ENCODE measurements at regions of chr11 and their contacts with region 1.

Region 1: DNA sequence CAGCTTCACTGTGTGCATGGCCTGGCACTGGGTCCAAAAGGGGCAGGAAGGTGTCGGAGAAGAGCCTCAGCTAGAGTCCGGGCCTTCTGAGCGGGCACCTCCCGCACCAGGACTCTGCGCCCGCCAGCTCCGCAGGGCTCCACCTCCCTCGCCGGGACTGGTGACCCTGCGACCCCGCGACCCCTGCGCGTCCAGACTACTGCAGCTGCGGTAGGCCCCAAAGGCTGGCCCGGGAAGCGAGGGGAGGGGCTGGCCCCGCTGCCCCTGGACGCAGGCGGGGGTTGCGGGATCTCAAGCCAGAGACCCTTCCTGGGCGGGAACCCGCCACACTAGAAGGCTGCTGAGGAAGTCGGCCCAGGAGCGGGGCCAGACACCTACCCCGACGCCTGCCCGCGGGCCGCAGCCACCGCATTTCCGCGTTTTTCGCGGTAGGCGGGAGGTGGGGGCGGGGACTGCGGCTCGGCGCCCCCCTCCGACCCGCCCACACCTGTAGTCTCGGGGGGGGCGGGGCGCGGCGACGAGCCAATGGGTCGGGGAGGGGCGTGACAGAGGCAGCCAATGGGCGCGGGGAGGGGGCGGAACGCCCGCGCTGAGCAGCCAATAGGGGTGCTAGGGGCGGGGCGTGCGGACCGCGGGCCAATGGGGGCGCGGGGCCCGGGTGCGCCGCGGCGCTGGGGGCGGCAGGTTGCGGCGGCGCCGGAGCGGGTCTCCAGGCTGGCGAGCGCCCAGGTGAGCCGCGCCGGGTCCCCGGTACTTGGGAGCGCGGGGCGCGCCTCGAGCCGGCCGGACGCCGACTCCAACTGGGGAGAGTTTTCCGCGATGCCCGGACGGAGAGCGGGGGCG is at the starts of genes LMNTD2 and RASSF7:
- DNase-seq: peak; percentile 76
- ATAC-seq: peak; percentile 84
- H3K4me3 ChIP-seq: peak within 1 kb of the TSS; percentile 66 to 92
- H3K27ac ChIP-seq: peak within 1 kb of the TSS; percentile 97
- H3K4me1 ChIP-seq: peaks cover 23 to 40% of the 10 kb centered on the region in 2 experiments
- H3K27me3 ChIP-seq: no peaks in the 10 kb centered on the region
- CTCF ChIP-seq: no peak
- POLR2A ChIP-seq: no peak
- RAD21 ChIP-seq: no peak
- total RNA-seq, gene LMNTD2: 9.5 TPM
- total RNA-seq, gene RASSF7: 35.9 TPM

Region 2: DNA sequence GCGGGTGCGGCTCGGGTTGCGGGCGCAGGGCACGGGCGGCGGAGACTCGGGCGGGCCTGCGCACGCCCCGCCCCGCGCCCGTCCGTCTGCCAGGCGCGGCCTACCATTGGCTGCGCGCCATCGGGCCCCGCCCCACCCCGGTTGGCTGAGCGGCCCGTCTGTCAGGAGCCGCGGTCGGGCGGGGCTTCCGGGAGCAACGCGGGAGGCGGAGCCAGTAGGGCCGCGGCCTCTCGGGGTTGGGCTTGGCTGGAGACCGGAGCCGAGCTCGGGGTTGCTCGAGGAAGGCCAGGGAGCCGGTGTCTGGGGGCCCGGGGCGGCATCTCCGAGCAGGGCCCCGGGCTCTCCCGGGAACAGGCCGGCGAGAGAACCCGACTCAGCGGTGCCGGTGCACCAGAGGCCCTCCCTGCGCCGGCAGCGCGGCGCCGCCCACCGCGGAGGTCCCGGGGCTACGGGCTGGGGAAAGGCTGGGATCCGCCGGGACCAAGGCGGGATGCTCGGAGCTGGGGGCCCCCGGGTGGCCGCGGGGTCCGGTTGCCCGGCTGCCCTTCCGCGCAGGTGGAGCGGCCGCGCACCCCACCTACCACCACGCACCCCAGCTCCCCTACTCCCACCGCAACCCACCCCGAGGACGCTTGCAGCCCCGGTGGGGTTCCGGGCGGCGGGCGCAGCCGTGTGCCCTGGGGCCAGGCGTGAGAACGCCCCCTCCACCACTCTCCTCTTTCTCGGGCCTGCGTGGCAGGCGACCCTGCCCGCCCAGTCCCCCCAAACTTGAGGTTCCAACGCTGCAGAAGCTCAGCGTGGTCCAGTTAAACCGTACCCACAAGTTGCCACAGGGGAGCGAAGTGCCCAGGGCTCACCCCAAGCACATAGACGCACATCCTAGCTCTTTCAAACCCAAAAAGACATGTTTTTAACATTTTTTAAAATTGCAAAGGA is 24.7 kb before region 1 on chr11 and contains the start of gene HRAS:
- CTCF ChIA-PET with region 1: no interaction called
- POLR2A ChIA-PET with region 1: no interaction called
- RAD21 ChIA-PET with region 1: no interaction called
- intact Hi-C with region 1: loop called (anchors 2 kb)
- DNase-seq: peak; percentile 86
- ATAC-seq: peak; percentile 83
- H3K4me3 ChIP-seq: peak within 1 kb of the TSS; percentile 76 to 90
- H3K27ac ChIP-seq: peak within 1 kb of the TSS; percentile 100
- H3K4me1 ChIP-seq: peaks cover 15 to 33% of the 10 kb centered on the region in 2 experiments; a peak in 3 of 4 replicates
- H3K27me3 ChIP-seq: no peaks in the 10 kb centered on the region
- CTCF ChIP-seq: no peak
- POLR2A ChIP-seq: peak; percentile 59
- RAD21 ChIP-seq: no peak
- total RNA-seq, gene HRAS: 104 TPM

Region 3: DNA sequence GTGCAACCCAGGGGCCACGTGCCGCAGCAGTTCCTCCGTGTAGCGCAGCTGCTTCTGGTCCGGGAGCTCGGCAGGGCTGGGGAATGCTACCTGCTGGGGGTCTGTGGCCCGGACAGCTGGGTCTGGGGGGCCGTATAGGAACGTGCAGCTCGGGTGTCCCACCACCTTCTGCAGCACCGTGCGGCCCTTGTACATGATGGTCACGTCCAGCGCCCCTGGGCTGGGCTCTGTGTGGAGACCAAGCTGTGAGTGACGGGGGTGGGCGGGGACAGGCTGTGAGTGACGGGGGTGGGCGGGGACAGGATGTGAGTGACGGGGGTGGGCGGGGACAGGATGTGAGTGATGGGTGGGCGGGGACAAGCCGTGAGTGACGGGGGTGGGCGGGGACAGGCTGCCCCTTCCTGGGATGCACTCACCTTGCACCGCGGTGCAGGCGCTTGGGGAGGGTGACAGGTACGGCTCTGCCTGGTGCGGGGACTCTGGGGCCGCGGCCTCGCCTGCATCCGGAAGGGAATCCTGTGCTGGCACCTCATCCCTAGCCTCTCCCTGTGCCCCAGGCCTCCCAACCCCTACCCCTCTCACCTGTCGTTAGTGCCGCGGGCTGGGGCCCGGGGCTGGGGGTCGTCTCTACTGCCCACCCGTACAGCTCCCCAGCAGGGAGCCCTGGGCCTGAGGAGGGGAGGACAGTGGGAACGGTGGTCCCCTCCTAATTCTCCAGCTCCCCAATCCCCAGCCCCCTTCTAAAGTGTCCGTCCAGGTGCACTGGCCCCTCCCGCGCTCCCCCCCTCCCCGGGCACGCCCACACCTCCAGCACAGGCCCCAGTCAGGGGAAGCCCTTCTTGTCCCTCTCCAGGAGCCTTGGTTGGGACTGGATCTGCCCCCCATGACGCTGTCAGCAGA is 53.1 kb after region 1 on chr11:
- CTCF ChIA-PET with region 1: interaction called, 3 read pairs
- POLR2A ChIA-PET with region 1: no interaction called
- RAD21 ChIA-PET with region 1: no interaction called
- intact Hi-C with region 1: loop called (anchors 1 kb)
- DNase-seq: peak; percentile 59
- ATAC-seq: peak; percentile 40
- H3K4me3 ChIP-seq: no peak overlapping the region
- H3K27ac ChIP-seq: peak overlapping the region; percentile 69
- H3K4me1 ChIP-seq: peaks cover 8 to 42% of the 10 kb centered on the region in 2 experiments
- H3K27me3 ChIP-seq: no peaks in the 10 kb centered on the region
- CTCF ChIP-seq: no peak
- POLR2A ChIP-seq: no peak
- RAD21 ChIP-seq: no peak